ENCODE measurements at regions of chr19 and their contacts with region 1.

Region 1: GRCh38 chr19:3163230-3163886 is 15.2 kb upstream of the S1PR4 start:
- DNase-seq: peak; percentile 84
- ATAC-seq: peak; percentile 94
- H3K4me3 ChIP-seq: no peak overlapping the region
- H3K4me3 Mint-ChIP-seq: peak overlapping the region; percentile 62
- H3K27ac ChIP-seq: no peak overlapping the region
- H3K27ac Mint-ChIP-seq: peak overlapping the region; percentile 63
- H3K4me1 ChIP-seq: peaks cover 11 to 23% of the 10 kb centered on the region in 2 donors
- H3K4me1 Mint-ChIP-seq: peaks cover 19% of the 10 kb centered on the region
- H3K27me3 ChIP-seq: no peaks in the 10 kb centered on the region
- H3K27me3 Mint-ChIP-seq: no peaks in the 10 kb centered on the region
- CTCF ChIP-seq: peak; percentile 97

Region 2: GRCh38 chr19:2423071-2423914 is 740.1 kb before region 1 on chr19:
- CTCF ChIA-PET with region 1: no interaction called
- POLR2A ChIA-PET with region 1: no interaction called
- intact Hi-C with region 1: no loop called
- DNase-seq: peak; percentile 13
- ATAC-seq: no peak
- H3K4me3 ChIP-seq: no peak overlapping the region
- H3K4me3 Mint-ChIP-seq: no peak overlapping the region
- H3K27ac ChIP-seq: no peak overlapping the region
- H3K27ac Mint-ChIP-seq: no peak overlapping the region
- H3K4me1 ChIP-seq: peaks cover 14 to 18% of the 10 kb centered on the region in 2 donors
- H3K4me1 Mint-ChIP-seq: peaks cover 13% of the 10 kb centered on the region
- H3K27me3 ChIP-seq: no peaks in the 10 kb centered on the region
- H3K27me3 Mint-ChIP-seq: no peaks in the 10 kb centered on the region
- CTCF ChIP-seq: no peak

Region 3: GRCh38 chr19:2962045-2962561 is 201.3 kb before region 1 on chr19:
- CTCF ChIA-PET with region 1: interaction called, 10 read pairs
- POLR2A ChIA-PET with region 1: no interaction called
- intact Hi-C with region 1: loop called (anchors 1 kb)
- DNase-seq: peak; percentile 91
- ATAC-seq: peak; percentile 73
- H3K4me3 ChIP-seq: peak overlapping the region in 3 of 5 experiments; percentile 2 to 33 (median 9)
- H3K4me3 Mint-ChIP-seq: peak overlapping the region; percentile 2
- H3K27ac ChIP-seq: no peak overlapping the region
- H3K27ac Mint-ChIP-seq: peak overlapping the region; percentile 71
- H3K4me1 ChIP-seq: peaks cover 13 to 18% of the 10 kb centered on the region in 2 donors
- H3K4me1 Mint-ChIP-seq: peaks cover 14% of the 10 kb centered on the region
- H3K27me3 ChIP-seq: no peaks in the 10 kb centered on the region
- H3K27me3 Mint-ChIP-seq: no peaks in the 10 kb centered on the region
- CTCF ChIP-seq: peak; percentile 82

Region 4: GRCh38 chr19:3075895-3076431 is 87.4 kb before region 1 on chr19:
- CTCF ChIA-PET with region 1: interaction called, 6 read pairs
- POLR2A ChIA-PET with region 1: no interaction called
- intact Hi-C with region 1: loop called (anchors 10 kb)
- DNase-seq: peak; percentile 87
- ATAC-seq: peak; percentile 92
- H3K4me3 ChIP-seq: peak overlapping the region in 1 of 5 experiments; percentile 40
- H3K4me3 Mint-ChIP-seq: no peak overlapping the region
- H3K27ac ChIP-seq: no peak overlapping the region
- H3K27ac Mint-ChIP-seq: no peak overlapping the region
- H3K4me1 ChIP-seq: peaks cover 0 to 13% of the 10 kb centered on the region in 2 donors
- H3K4me1 Mint-ChIP-seq: peaks cover 9% of the 10 kb centered on the region
- H3K27me3 ChIP-seq: peaks cover 0 to 8% (median 2%) of the 10 kb centered on the region in 4 experiments
- H3K27me3 Mint-ChIP-seq: no peaks in the 10 kb centered on the region
- CTCF ChIP-seq: peak; percentile 88

Region 5: DNA sequence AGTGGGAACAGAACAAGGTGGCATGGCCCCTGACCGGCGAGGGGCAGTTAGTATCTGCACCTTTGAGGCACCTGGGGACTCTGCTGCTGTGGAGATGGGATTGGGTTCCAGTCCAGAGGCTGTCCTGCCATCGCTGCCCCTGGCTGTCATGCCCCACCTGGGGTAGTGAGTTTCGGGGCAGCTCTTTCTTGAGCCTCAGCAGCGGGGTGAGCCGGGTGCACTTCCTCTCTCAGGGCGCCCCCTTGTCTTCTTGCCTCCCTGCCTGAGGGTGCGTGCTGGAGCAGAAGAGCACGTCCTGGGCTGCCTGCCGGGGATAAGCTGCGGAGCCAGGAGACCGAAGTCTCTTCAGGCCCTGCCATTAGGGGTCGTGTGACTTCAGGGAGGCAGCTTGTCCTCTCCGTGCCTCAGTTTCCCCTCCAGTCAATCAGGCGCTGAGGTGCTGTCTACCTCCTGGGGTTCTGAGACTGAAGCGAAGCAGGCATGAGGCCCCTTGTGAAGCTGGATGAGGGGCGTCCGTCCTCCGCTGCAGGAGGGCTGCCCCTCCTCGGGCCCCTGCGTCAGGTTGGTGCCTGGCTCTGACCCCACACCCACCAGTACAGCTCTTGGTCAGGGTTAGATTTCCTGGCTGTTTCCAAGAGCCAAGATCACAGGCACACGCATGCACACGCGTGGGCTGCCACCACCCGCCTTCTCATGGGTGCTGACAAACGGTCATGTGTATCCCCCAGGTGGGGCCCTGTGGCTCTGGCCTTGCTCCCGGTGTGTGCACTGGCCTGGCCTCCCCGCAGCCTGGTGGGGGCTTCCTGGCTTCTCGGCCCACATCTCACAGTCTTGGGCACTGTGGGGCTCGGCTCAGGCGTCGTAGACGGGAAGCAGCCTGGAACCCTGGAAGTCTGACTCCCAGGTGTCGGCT is 60.9 kb before region 1 on chr19:
- CTCF ChIA-PET with region 1: interaction called, 11 read pairs
- POLR2A ChIA-PET with region 1: no interaction called
- intact Hi-C with region 1: no loop called
- DNase-seq: no peak
- ATAC-seq: no peak
- H3K4me3 ChIP-seq: no peak overlapping the region
- H3K4me3 Mint-ChIP-seq: no peak overlapping the region
- H3K27ac ChIP-seq: no peak overlapping the region
- H3K27ac Mint-ChIP-seq: no peak overlapping the region
- H3K4me1 ChIP-seq: peaks cover 20 to 33% of the 10 kb centered on the region in 2 donors
- H3K4me1 Mint-ChIP-seq: peaks cover 20% of the 10 kb centered on the region
- H3K27me3 ChIP-seq: peaks cover 0 to 10% (median 2%) of the 10 kb centered on the region in 4 experiments
- H3K27me3 Mint-ChIP-seq: peaks cover 5% of the 10 kb centered on the region
- CTCF ChIP-seq: no peak

Region 6: DNA sequence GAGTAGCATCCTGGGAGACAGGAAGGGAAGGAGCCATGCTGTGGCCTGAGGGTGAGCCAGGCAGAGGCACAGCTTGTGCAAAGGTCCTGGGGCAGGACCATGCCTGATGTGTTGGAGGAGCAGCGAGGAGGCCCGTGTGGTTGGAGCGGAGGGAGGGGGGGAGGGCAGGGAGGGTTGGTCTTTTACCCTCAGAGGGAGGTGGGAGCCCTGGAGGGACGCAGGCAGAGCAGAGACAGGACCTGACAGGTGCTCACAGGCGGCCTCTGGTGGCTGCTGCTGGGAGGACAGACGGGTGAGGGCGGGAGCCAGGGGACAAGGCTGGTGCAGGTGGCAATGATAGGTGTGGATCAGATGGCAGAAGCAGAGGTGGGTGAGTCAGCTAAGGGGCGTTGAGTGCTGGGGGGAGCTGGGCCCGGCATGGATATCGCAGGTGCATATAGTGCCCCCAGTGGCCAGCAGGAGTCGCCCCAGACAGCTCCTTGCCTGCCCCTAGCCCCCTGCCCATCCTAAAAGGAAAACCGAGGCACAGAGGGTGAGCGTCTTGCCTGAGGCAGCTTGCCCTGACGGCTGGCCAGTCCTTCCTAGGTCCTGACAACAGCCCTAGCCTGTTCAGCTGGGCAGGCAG is 37.3 kb before region 1 on chr19:
- CTCF ChIA-PET with region 1: interaction called, 55 read pairs
- POLR2A ChIA-PET with region 1: interaction called, 7 read pairs
- intact Hi-C with region 1: loop called (anchors 1 kb)
- DNase-seq: peak; percentile 65
- ATAC-seq: peak; percentile 69
- H3K4me3 ChIP-seq: no peak overlapping the region
- H3K4me3 Mint-ChIP-seq: no peak overlapping the region
- H3K27ac ChIP-seq: no peak overlapping the region
- H3K27ac Mint-ChIP-seq: peak overlapping the region; percentile 61
- H3K4me1 ChIP-seq: peaks cover 8 to 10% of the 10 kb centered on the region in 2 donors
- H3K4me1 Mint-ChIP-seq: peaks cover 21% of the 10 kb centered on the region
- H3K27me3 ChIP-seq: no peaks in the 10 kb centered on the region
- H3K27me3 Mint-ChIP-seq: no peaks in the 10 kb centered on the region
- CTCF ChIP-seq: peak; percentile 73

Region 7: DNA sequence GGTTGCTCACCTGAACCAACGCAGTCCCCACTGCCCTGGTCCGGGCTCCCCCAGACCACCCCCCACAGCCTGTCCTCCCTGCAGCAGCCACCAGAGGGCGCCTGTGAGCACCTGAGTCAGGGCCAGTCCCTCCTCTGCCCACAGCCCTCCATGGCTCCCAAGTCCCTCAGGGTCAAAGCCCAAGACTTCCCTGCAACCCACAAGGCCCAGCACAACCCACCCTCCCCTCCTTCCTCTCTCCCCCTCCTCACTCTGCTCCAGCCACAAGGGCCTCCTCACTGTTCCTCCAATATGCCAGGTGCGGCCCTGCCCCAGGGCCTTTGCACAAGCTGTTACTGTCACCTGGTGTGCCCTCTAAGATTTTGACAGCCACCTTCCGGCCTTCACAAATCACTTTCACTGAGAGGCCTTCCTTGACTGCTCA is 16.7 kb before region 1 on chr19:
- CTCF ChIA-PET with region 1: interaction called, 25 read pairs
- POLR2A ChIA-PET with region 1: interaction called, 6 read pairs
- intact Hi-C with region 1: loop called (anchors 1 kb)
- DNase-seq: peak; percentile 63
- ATAC-seq: no peak
- H3K4me3 ChIP-seq: no peak overlapping the region
- H3K4me3 Mint-ChIP-seq: no peak overlapping the region
- H3K27ac ChIP-seq: no peak overlapping the region
- H3K27ac Mint-ChIP-seq: no peak overlapping the region
- H3K4me1 ChIP-seq: peaks cover 13 to 16% of the 10 kb centered on the region in 2 donors
- H3K4me1 Mint-ChIP-seq: peaks cover 17% of the 10 kb centered on the region
- H3K27me3 ChIP-seq: peaks cover 0 to 5% (median 2%) of the 10 kb centered on the region in 4 experiments
- H3K27me3 Mint-ChIP-seq: peaks cover 3% of the 10 kb centered on the region
- CTCF ChIP-seq: peak; percentile 85

Region 8: GRCh38 chr19:3365836-3366752 is 202.7 kb after region 1 on chr19 and contains the start of gene NFIC:
- CTCF ChIA-PET with region 1: no interaction called
- POLR2A ChIA-PET with region 1: no interaction called
- intact Hi-C with region 1: no loop called
- DNase-seq: no peak
- ATAC-seq: no peak
- H3K4me3 ChIP-seq: peak within 1 kb of the TSS; percentile 29 to 56 (median 44)
- H3K4me3 Mint-ChIP-seq: peak within 1 kb of the TSS; percentile 74
- H3K27ac ChIP-seq: no peak within 1 kb of the TSS
- H3K27ac Mint-ChIP-seq: peak within 1 kb of the TSS; percentile 34
- H3K4me1 ChIP-seq: peaks cover 45 to 52% of the 10 kb centered on the region in 2 donors
- H3K4me1 Mint-ChIP-seq: peaks cover 53% of the 10 kb centered on the region
- H3K27me3 ChIP-seq: peaks cover 0 to 27% (median 11%) of the 10 kb centered on the region in 4 experiments
- H3K27me3 Mint-ChIP-seq: peaks cover 26% of the 10 kb centered on the region
- CTCF ChIP-seq: no peak
- total RNA-seq, gene NFIC: 23.6 and 24.3 TPM in 2 replicates

Region 9: GRCh38 chr19:3398114-3398899 is 234.9 kb after region 1 on chr19:
- CTCF ChIA-PET with region 1: no interaction called
- POLR2A ChIA-PET with region 1: no interaction called
- intact Hi-C with region 1: no loop called
- DNase-seq: no peak
- ATAC-seq: no peak
- H3K4me3 ChIP-seq: no peak overlapping the region
- H3K4me3 Mint-ChIP-seq: no peak overlapping the region
- H3K27ac ChIP-seq: no peak overlapping the region
- H3K27ac Mint-ChIP-seq: no peak overlapping the region
- H3K4me1 ChIP-seq: no peaks in the 10 kb centered on the region
- H3K4me1 Mint-ChIP-seq: no peaks in the 10 kb centered on the region
- H3K27me3 ChIP-seq: no peaks in the 10 kb centered on the region
- H3K27me3 Mint-ChIP-seq: no peaks in the 10 kb centered on the region
- CTCF ChIP-seq: no peak